Calu3 (cell line): ENCODE measurements at regions of chr3 and their contacts with region 1.

Region 1: GRCh38 chr3:152385761-152386160 is 117.0 kb downstream of the MBNL1 start:
- DNase-seq: no peak
- H3K4me3 Mint-ChIP-seq: no peak overlapping the region
- H3K27ac Mint-ChIP-seq: peak overlapping the region; percentile 45
- H3K4me1 Mint-ChIP-seq: peaks cover 64% of the 10 kb centered on the region
- H3K27me3 Mint-ChIP-seq: no peaks in the 10 kb centered on the region
- CTCF ChIP-seq: no peak

Region 2: DNA sequence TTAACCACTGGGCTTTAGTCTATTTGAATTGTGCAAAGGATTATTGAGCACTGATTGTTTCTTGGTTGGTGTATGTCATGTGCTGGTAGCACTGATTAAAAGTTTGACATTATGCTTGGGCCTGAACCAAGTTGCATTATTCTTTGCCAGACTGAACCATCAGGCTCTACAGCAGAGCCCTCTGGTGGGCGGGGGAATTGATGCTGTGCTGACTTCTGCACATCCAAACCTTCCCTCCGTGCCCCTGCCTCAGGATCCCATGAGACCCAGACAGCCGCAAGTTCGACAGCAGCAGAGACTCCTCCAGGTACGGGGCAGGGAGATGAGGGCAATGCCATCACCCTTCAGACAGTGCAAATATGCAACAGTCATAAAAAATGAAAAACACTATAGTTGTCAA is 972.8 kb before region 1 on chr3:
- CTCF ChIA-PET with region 1: no interaction called
- intact Hi-C with region 1: no loop called
- DNase-seq: peak; percentile 12
- H3K4me3 Mint-ChIP-seq: no peak overlapping the region
- H3K27ac Mint-ChIP-seq: no peak overlapping the region
- H3K4me1 Mint-ChIP-seq: no peaks in the 10 kb centered on the region
- H3K27me3 Mint-ChIP-seq: no peaks in the 10 kb centered on the region
- CTCF ChIP-seq: no peak

Region 3: GRCh38 chr3:152309535-152310307 is 76.0 kb before region 1 on chr3:
- CTCF ChIA-PET with region 1: interaction called, 3 read pairs
- intact Hi-C with region 1: loop called (anchors 5 kb)
- DNase-seq: no peak
- H3K4me3 Mint-ChIP-seq: no peak overlapping the region
- H3K27ac Mint-ChIP-seq: peak overlapping the region; percentile 72
- H3K4me1 Mint-ChIP-seq: peaks cover 59% of the 10 kb centered on the region
- H3K27me3 Mint-ChIP-seq: no peaks in the 10 kb centered on the region
- CTCF ChIP-seq: no peak

Region 4: GRCh38 chr3:152328841-152329240 is 56.9 kb before region 1 on chr3:
- CTCF ChIA-PET with region 1: interaction called, 3 read pairs
- intact Hi-C with region 1: loop called (anchors 2 kb)
- DNase-seq: peak; percentile 28
- H3K4me3 Mint-ChIP-seq: peak overlapping the region; percentile 32
- H3K27ac Mint-ChIP-seq: peak overlapping the region; percentile 88
- H3K4me1 Mint-ChIP-seq: peaks cover 67% of the 10 kb centered on the region
- H3K27me3 Mint-ChIP-seq: no peaks in the 10 kb centered on the region
- CTCF ChIP-seq: no peak

Region 5: GRCh38 chr3:152436707-152437590 is 51.2 kb after region 1 on chr3:
- CTCF ChIA-PET with region 1: interaction called, 3 read pairs
- intact Hi-C with region 1: loop called (anchors 10 kb)
- DNase-seq: no peak
- H3K4me3 Mint-ChIP-seq: peak overlapping the region; percentile 48
- H3K27ac Mint-ChIP-seq: peak overlapping the region; percentile 56
- H3K4me1 Mint-ChIP-seq: peaks cover 47% of the 10 kb centered on the region
- H3K27me3 Mint-ChIP-seq: no peaks in the 10 kb centered on the region
- CTCF ChIP-seq: no peak